Posterior vena cava (tissue), 2 donors: ENCODE measurements at regions of chr11 and their contacts with region 1.

Region 1: GRCh38 chr11:57798905-57799559 is 37.4 kb downstream of the CTNND1 start:
- DNase-seq: no peak

Region 2: GRCh38 chr11:57619331-57619730 is 179.7 kb before region 1 on chr11:
- intact Hi-C with region 1: no loop called
- DNase-seq: no peak

Region 3: DNA sequence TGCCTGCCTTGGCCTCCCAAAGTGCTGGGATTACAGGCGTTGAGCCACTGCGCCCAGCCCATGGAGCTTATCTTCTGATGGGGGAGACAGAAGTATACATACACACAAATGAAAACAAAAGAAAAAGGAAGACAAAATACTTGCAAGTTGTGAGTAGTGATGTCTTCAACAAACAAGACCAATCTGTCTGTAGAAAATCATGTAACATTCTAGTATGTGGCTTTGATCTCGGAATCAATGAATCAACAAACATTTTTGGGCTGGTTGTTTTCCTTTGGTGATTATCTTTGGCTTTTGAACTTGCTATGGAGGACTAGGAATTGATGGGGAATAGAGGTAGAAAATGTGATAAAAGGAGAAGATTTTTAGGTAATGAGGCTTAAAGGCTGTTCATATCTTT is 40.9 kb before region 1 on chr11:
- intact Hi-C with region 1: loop called in 1 of 2 experiments (anchors 5 kb)
- DNase-seq: no peak